K562 (cell line): ENCODE measurements at regions of chr6 and their contacts with region 1.

Region 1: GRCh38 chr6:28953039-28953584 is 29.3 kb upstream of the TRIM27 start:
- DNase-seq: peak; percentile 78 to 92 (median 84)
- ATAC-seq: peak; percentile 80
- H3K4me3 ChIP-seq: peak overlapping the region; percentile 43
- H3K27ac ChIP-seq: peak overlapping the region; percentile 76
- H3K4me1 ChIP-seq: peaks cover 22 to 33% of the 10 kb centered on the region in 2 experiments
- H3K27me3 ChIP-seq: no peaks in the 10 kb centered on the region
- CTCF ChIP-seq: no peak
- EP300 ChIP-seq: peak; percentile 82
- POLR2A ChIP-seq: no peak
- RAD21 ChIP-seq: no peak

Region 2: DNA sequence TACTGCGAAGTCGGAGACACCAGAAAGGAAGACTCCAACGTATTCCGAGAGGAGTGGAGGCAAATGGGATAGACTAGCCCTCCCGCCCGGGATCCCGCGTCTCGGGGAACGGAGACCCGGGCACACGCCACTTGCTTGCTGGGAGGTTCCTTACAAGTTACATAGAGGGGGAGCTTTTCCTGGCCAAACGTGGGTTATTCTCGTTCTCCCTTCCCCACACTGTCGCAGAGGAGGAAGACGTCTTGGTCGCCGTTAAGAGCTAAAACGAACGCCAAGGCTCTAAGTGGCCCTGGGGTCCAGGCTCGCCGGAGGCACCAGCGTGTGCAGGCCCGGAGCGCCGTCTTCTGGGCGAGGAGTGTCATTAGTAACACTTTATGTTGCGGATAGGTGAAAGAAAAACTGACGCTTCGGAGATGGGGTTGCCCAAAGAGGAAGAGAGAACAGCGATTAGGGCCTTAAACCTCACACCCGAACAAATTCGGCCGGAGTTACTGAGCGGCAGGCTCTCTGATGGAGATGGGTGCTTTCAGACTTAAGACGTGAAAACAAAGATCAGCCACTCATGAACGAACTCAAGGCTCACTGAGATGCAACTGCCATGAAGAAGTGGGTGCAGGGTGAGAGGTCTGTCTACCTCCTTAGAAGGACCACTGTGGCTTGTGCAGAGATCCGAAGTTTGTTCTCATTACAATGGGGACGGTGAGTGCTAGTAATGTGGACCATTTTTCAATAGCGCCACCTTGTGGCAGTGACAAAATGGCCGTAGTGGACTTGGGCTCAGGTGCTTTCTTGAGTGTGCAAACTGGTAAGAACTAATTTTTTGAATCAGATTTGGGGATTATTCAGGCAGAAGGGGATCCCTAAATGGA is 63.7 kb after region 1 on chr6:
- CTCF ChIA-PET with region 1: no interaction called
- POLR2A ChIA-PET with region 1: no interaction called
- in situ Hi-C with region 1: no loop called
- intact Hi-C with region 1: loop called (anchors 2 kb)
- DNase-seq: peak; percentile 73 to 96 (median 78)
- ATAC-seq: peak; percentile 96
- H3K4me3 ChIP-seq: peak overlapping the region; percentile 56
- H3K27ac ChIP-seq: peak overlapping the region; percentile 69
- H3K4me1 ChIP-seq: peaks cover 3 to 7% of the 10 kb centered on the region in 2 experiments; a peak in 3 of 5 replicates
- H3K27me3 ChIP-seq: no peaks in the 10 kb centered on the region
- CTCF ChIP-seq: peak; percentile 90 to 93 (median 93)
- EP300 ChIP-seq: no peak
- POLR2A ChIP-seq: no peak
- RAD21 ChIP-seq: peak; percentile 88 to 93